ENCODE measurements at regions of chr11 and their contacts with region 1.

Region 1: GRCh38 chr11:122796128-122796717 is 42.1 kb upstream of the CRTAM start:
- DNase-seq: peak; percentile 79
- ATAC-seq: peak; percentile 69
- H3K4me3 ChIP-seq: no peak overlapping the region
- H3K27ac ChIP-seq: no peak overlapping the region
- H3K4me1 ChIP-seq: peaks cover 8% of the 10 kb centered on the region; the same call in 1 of the 2 replicates
- H3K27me3 ChIP-seq: no peaks in the 10 kb centered on the region
- CTCF ChIP-seq: peak; percentile 98

Region 2: DNA sequence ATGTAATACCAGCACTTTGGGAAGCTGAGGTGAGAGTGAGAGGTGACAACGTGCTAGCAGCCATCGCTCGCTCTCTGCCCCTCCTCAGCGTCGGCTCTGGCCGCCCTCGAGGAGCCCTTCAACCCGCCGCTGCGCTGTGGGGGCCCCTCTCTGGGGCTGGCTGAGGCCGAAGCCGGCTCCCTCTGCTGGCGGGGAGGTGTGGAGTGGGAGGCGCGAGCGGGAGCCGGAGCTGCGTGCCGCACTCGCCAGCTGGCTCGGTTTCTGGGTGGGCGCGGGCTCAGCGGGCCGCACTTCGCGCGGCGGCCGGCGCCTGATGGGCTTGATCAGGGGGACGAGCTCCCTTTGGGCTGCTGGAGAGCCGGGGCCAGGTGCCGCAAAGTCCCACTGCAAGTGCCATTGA is 239.6 kb before region 1 on chr11:
- CTCF ChIA-PET with region 1: no interaction called
- POLR2A ChIA-PET with region 1: interaction called, 13 read pairs
- intact Hi-C with region 1: no loop called
- DNase-seq: no peak
- ATAC-seq: no peak
- H3K4me3 ChIP-seq: no peak overlapping the region
- H3K27ac ChIP-seq: no peak overlapping the region
- H3K4me1 ChIP-seq: no peaks in the 10 kb centered on the region
- H3K27me3 ChIP-seq: peaks cover 26% of the 10 kb centered on the region
- CTCF ChIP-seq: no peak; the same call in 1 of the 2 replicates

Region 3: DNA sequence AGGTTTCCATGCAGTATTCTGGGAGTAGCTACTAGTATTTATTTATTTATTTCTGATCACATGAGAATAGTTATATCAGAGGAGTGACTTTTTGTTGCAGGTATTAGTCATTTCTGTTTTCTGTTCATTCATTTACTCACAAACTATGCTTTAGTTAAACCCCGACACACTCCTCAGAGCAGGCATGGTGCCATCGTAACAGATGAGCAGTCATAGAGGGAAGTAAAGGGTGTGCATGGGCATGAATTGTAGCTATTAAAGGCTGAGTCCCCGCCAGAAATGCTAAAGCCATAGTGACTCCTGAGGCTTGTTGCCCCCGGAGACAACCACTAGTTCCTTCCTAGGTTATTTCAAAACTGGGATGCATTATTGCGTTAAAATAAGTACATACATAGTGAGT is 96.9 kb after region 1 on chr11:
- CTCF ChIA-PET with region 1: no interaction called
- POLR2A ChIA-PET with region 1: no interaction called
- intact Hi-C with region 1: no loop called
- DNase-seq: no peak
- ATAC-seq: no peak
- H3K4me3 ChIP-seq: no peak overlapping the region
- H3K27ac ChIP-seq: no peak overlapping the region
- H3K4me1 ChIP-seq: peaks cover 10% of the 10 kb centered on the region
- H3K27me3 ChIP-seq: no peaks in the 10 kb centered on the region
- CTCF ChIP-seq: no peak